WTC11 (cell line): ENCODE measurements at regions of chrX and their contacts with region 1.

Region 1: DNA sequence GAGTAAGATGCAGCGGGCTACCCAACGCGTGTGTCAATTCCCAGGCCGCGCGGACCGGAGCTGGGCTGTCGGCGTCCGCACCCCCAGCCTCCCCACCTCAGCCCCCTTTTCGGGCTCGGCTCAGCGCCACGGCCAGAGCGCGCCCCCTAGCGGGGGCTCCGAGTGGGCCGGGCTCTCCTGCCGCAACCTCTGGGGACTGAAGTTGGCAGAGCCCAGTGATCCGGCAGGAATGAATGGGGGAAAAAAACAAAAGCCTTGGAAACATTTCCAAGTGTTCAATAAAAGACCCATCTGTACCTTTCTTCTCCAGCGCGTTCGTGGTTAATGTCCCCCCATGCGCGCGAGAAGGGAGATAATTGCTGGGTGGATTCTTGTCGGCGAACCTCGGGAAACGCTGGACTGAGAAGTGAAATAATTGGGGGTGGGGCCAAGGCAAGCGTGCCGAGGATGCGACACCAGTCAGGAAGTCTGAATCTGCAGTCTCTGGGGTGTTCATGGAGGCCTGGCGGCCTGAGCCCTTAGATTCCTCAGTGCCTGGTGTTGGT is 5.2 kb upstream of the ARX start:
- DNase-seq: peak; percentile 77
- ATAC-seq: peak; percentile 69
- H3K4me3 Mint-ChIP-seq: peak overlapping the region; percentile 65
- H3K27ac Mint-ChIP-seq: no peak overlapping the region
- H3K4me1 Mint-ChIP-seq: peaks cover 52% of the 10 kb centered on the region
- H3K27me3 Mint-ChIP-seq: peaks cover 89% of the 10 kb centered on the region
- CTCF ChIP-seq: peak; percentile 76

Region 2: DNA sequence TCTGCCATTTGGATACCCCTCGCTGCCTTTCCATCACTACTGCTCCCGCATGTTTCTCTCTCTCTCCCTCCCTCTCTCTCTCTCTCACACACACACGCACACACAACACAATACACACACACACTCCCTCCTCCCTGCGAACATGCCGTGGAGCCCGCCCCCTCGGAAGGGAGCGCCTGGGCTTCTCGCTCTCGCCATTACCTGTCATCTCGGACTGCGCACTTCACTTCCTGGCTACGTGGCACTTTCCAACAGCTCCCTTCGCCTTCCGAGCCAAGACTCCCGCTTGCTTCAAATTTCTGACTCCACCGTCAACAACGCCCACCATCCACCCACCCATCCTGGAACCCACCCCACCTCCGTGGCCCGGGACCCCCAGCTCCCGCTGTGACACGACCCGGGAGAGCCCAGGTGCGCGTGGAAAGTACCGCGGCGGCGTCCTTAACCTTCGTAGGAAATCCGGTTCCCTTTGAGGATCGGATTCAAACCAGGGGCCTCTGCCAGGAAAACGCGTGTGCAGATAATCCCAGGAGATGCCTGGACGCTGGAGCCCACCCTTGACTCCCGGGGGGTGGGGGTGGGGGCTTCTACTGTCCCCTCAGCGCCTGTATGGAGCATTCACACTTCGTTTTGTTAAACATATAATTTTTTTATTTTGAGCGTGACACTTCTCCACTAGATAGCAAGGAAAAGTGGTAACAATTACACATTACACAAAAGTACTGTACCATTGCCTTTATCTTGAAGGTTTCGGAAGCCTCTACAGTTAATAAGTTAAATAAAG is 17.7 kb before region 1 on chrX:
- CTCF ChIA-PET with region 1: interaction called, 11 read pairs
- POLR2A ChIA-PET with region 1: interaction called, 4 read pairs
- DNase-seq: no peak
- ATAC-seq: peak; percentile 15
- H3K4me3 Mint-ChIP-seq: peak overlapping the region; percentile 80
- H3K27ac Mint-ChIP-seq: no peak overlapping the region
- H3K4me1 Mint-ChIP-seq: peaks cover 49% of the 10 kb centered on the region
- H3K27me3 Mint-ChIP-seq: peaks cover 94% of the 10 kb centered on the region
- CTCF ChIP-seq: no peak

Region 3: DNA sequence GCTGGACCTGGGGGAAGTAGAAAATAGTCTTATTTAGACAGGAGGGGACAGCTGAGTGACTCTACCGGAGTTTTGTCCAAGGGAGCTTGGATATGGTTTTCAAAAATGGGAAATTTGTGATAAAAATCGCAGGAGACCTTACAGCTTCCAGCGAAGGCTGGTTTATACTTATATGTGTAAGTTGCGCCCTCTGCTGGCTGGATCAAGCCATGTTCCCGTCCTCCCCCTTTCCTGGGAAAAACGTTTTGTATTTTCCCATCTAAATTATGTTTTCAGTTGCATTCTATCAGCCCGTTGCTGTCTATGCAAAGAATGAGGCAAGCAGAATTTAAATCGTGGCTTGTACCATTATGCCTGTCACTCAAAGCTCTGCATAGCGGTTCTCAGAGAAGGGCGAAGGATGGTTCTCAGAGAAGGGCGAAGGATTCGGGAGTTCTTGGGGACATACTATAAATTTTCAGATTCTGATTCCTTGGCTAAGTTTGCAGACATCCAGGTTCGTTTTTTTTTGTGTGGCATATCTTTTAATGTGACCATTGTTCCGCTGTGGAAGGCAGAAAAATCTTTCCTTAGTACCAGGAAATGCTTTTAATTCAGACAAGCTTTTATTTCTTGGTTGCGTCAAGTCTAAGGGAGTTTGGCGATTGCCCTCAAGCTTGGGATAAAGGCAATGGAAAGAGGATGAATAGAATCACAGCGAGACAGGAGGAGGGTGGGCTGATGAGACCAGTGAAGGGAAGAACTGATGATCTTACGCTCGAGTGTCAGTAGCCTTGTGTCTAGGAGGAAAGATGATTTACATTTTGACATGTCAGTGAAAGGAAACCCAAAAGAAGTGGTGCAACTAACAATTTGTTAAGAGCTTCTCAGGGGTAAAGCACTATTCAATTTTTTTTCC is 123.3 kb after region 1 on chrX:
- CTCF ChIA-PET with region 1: interaction called, 13 read pairs
- POLR2A ChIA-PET with region 1: no interaction called
- DNase-seq: peak; percentile 55
- ATAC-seq: peak; percentile 65; the same call in 1 of the 2 replicates
- H3K4me3 Mint-ChIP-seq: peak overlapping the region; percentile 48
- H3K27ac Mint-ChIP-seq: no peak overlapping the region
- H3K4me1 Mint-ChIP-seq: peaks cover 25% of the 10 kb centered on the region
- H3K27me3 Mint-ChIP-seq: no peaks in the 10 kb centered on the region
- CTCF ChIP-seq: peak; percentile 65